ENCODE measurements at regions of chr14 and their contacts with region 1.

Region 1: GRCh38 chr14:60091550-60092530 is at the start of gene PCNX4:
- DNase-seq: peak; percentile 97 to 98 (median 98)
- ATAC-seq: peak; percentile 95 to 99 (median 98)
- H3K4me3 ChIP-seq: peak within 1 kb of the TSS; percentile 50 to 90 (median 74)
- H3K27ac ChIP-seq: peak within 1 kb of the TSS; percentile 91 to 99 (median 98)
- H3K4me1 ChIP-seq: peaks cover 0 to 54% (median 31%) of the 10 kb centered on the region in 12 donors
- H3K27me3 ChIP-seq: no peaks in the 10 kb centered on the region
- CTCF ChIP-seq: peak in 2 of 12 donors; percentile 7 to 14
- POLR2A ChIP-seq: peak; percentile 32 to 95
- total RNA-seq, gene PCNX4: 22.1 to 56.2 (median 37.3) TPM

Region 2: DNA sequence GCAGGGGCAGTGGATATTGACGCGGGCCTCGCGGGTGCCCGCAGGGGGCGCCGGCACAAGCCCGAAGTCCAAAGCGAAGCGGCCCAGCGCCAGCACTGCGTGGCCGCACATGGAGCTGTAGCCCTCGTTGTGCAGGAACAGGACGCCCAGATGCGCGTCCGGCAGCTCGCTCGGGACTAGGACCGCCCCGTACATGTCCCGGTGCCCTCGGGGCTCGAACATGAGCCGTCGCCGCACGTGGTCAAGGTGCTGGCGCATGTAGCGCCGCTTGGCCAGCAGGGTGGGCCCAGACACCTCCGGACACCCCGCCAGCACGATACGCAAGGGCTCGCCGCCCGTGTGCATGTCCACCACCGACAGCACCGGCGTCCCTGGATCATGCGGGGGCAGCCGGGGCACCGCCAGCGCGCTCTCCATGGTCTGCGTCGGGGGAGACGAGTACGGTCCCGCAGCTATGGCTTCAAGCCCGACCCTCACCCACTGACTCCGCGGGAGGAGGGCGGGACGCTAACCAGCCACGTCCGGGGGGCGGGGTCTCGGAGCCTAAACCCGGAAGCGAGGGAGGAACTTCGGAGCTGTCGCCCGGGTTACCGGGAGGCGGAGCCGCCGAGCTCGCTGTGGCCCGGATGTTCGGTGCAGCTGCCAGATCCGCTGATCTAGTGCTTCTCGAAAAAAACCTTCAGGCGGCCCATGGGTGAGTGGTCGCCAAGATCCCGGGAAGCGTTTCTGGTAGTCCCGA is 607.8 kb before region 1 on chr14 and contains the starts of genes JKAMP and L3HYPDH:
- intact Hi-C with region 1: loop called in 1 of 10 experiments (anchors 10 kb)
- DNase-seq: peak; percentile 98 to 99 (median 98)
- ATAC-seq: peak; percentile 97 to 98 (median 98)
- H3K4me3 ChIP-seq: peak within 1 kb of the TSS; percentile 54 to 94 (median 84)
- H3K27ac ChIP-seq: peak within 1 kb of the TSS; percentile 69 to 97 (median 96)
- H3K4me1 ChIP-seq: peaks cover 3 to 75% (median 51%) of the 10 kb centered on the region in 12 donors
- H3K27me3 ChIP-seq: no peaks in the 10 kb centered on the region
- CTCF ChIP-seq: peak; percentile 55 to 78 (median 66)
- POLR2A ChIP-seq: peak in 1 of 2 donors; percentile 80
- total RNA-seq, gene JKAMP: 24.2 to 38.6 (median 31.2) TPM
- total RNA-seq, gene L3HYPDH: 8.7 to 17.9 (median 14.1) TPM

Measured in heart left ventricle (tissue), 16 donors.